ENCODE measurements at regions of chr12 and their contacts with region 1.

Region 1: GRCh38 chr12:104215638-104216297 is at the start of gene TXNRD1:
- DNase-seq: peak; percentile 70 to 79 (median 76)
- H3K4me3 ChIP-seq: peak within 1 kb of the TSS; percentile 55 to 78 (median 56)
- H3K4me3 Mint-ChIP-seq: peak within 1 kb of the TSS; percentile 81 to 94
- H3K27ac ChIP-seq: no peak within 1 kb of the TSS
- H3K27ac Mint-ChIP-seq: peak within 1 kb of the TSS in 2 of 7 donors; percentile 50 to 58
- H3K4me1 ChIP-seq: peaks cover 13 to 18% of the 10 kb centered on the region in 2 donors
- H3K4me1 Mint-ChIP-seq: peaks cover 20% of the 10 kb centered on the region
- H3K27me3 ChIP-seq: peaks cover 5 to 6% of the 10 kb centered on the region in 2 donors
- H3K27me3 Mint-ChIP-seq: peaks cover 12 to 21% (median 14%) of the 10 kb centered on the region in 3 donors
- CTCF ChIP-seq: peak; percentile 85
- polyA plus RNA-seq, gene TXNRD1: 26.9 to 46.1 (median 29.2) TPM

Region 2: GRCh38 chr12:104286538-104287482 is 71.0 kb after region 1 on chr12:
- intact Hi-C with region 1: loop called in 1 of 2 experiments (anchors 5 kb)
- DNase-seq: peak; percentile 91 to 97 (median 92)
- H3K4me3 ChIP-seq: peak overlapping the region; percentile 67 to 87 (median 76)
- H3K4me3 Mint-ChIP-seq: peak overlapping the region; percentile 95 to 98
- H3K27ac ChIP-seq: peak overlapping the region; percentile 90 to 96
- H3K27ac Mint-ChIP-seq: peak overlapping the region; percentile 99 to 100 (median 99)
- H3K4me1 ChIP-seq: peaks cover 31 to 36% of the 10 kb centered on the region in 2 donors
- H3K4me1 Mint-ChIP-seq: peaks cover 31% of the 10 kb centered on the region
- H3K27me3 ChIP-seq: no peaks in the 10 kb centered on the region
- H3K27me3 Mint-ChIP-seq: peaks cover 0 to 2% (median 0%) of the 10 kb centered on the region in 3 donors
- CTCF ChIP-seq: no peak

Region 3: DNA sequence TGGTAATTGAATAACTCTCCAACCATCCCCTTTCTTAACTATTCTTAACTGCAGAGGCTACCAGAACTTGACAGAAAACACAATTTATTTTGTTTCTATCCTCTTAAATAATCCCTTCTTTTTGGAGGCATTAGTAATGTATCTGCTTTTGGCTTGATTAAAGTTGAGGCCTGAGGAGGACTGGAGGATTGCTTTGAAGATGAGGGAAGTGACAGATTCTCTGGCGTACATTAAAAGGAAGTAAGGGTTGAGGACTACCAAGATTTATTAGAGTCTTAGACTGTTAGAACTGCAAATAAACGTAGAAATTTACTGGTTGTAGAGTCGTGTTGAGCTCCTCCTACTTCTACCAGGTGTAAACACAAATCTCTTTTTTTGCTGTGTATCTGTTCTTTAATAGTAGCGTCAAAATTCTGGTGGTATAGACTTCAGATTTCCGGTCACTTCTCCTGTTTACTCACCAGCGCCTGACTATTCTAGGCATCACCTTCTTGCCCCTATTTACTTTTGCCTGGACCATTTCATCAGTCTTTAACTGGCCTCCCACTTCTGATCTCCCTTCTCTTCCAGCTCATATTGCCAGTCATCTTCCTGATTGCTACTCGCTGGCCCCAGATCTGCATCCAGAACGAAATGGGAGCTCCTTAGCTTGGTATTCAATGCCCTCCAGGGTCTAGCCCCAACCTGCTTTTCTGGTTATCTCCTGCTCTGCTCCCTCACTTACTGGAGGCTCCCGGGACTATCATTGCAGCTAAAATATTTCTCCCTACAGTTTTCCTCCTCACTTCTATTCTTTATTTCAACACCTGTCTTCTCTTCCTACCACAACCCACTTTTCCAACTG is 79.3 kb after region 1 on chr12:
- intact Hi-C with region 1: loop called in 1 of 2 experiments (anchors 5 kb)
- DNase-seq: no peak
- H3K4me3 ChIP-seq: no peak overlapping the region
- H3K4me3 Mint-ChIP-seq: no peak overlapping the region
- H3K27ac ChIP-seq: peak overlapping the region in 1 of 2 donors; percentile 70
- H3K27ac Mint-ChIP-seq: peak overlapping the region in 5 of 7 donors; percentile 35 to 79 (median 68)
- H3K4me1 ChIP-seq: peaks cover 5% of the 10 kb centered on the region in 2 donors
- H3K4me1 Mint-ChIP-seq: peaks cover 21% of the 10 kb centered on the region
- H3K27me3 ChIP-seq: no peaks in the 10 kb centered on the region
- H3K27me3 Mint-ChIP-seq: no peaks in the 10 kb centered on the region
- CTCF ChIP-seq: no peak

Region 4: GRCh38 chr12:104358347-104359003 is 142.7 kb after region 1 on chr12:
- intact Hi-C with region 1: loop called (anchors 5 kb)
- DNase-seq: peak; percentile 76 to 84 (median 83)
- H3K4me3 ChIP-seq: no peak overlapping the region
- H3K4me3 Mint-ChIP-seq: no peak overlapping the region
- H3K27ac ChIP-seq: no peak overlapping the region
- H3K27ac Mint-ChIP-seq: peak overlapping the region in 1 of 7 donors; percentile 25
- H3K4me1 ChIP-seq: no peaks in the 10 kb centered on the region
- H3K4me1 Mint-ChIP-seq: peaks cover 2% of the 10 kb centered on the region
- H3K27me3 ChIP-seq: no peaks in the 10 kb centered on the region
- H3K27me3 Mint-ChIP-seq: no peaks in the 10 kb centered on the region
- CTCF ChIP-seq: peak; percentile 92

Region 5: GRCh38 chr12:104555648-104556047 is 339.9 kb after region 1 on chr12:
- intact Hi-C with region 1: no loop called
- DNase-seq: no peak
- H3K4me3 ChIP-seq: no peak overlapping the region
- H3K4me3 Mint-ChIP-seq: no peak overlapping the region
- H3K27ac ChIP-seq: peak overlapping the region in 1 of 2 donors; percentile 6
- H3K27ac Mint-ChIP-seq: peak overlapping the region in 1 of 7 donors; percentile 31
- H3K4me1 ChIP-seq: peaks cover under 1 to 2% of the 10 kb centered on the region in 2 donors
- H3K4me1 Mint-ChIP-seq: peaks cover 45% of the 10 kb centered on the region
- H3K27me3 ChIP-seq: no peaks in the 10 kb centered on the region
- H3K27me3 Mint-ChIP-seq: peaks cover 0 to 4% (median 0%) of the 10 kb centered on the region in 3 donors
- CTCF ChIP-seq: no peak

Measured in CD14-positive monocyte (primary cell).